Caco-2 (cell line): ENCODE measurements at regions of chr17 and their contacts with region 1.

Region 1: GRCh38 chr17:48997083-48997826 is at the start of gene IGF2BP1:
- DNase-seq: peak; percentile 93 to 95
- H3K4me3 ChIP-seq: peak within 1 kb of the TSS; percentile 82
- H3K4me3 Mint-ChIP-seq: peak within 1 kb of the TSS; percentile 86
- H3K27ac Mint-ChIP-seq: peak within 1 kb of the TSS; percentile 94
- H3K4me1 ChIP-seq: peaks cover 38% of the 10 kb centered on the region
- H3K4me1 Mint-ChIP-seq: peaks cover 40% of the 10 kb centered on the region
- H3K27me3 ChIP-seq: no peaks in the 10 kb centered on the region
- H3K27me3 Mint-ChIP-seq: no peaks in the 10 kb centered on the region
- CTCF ChIP-seq: no peak
- total RNA-seq, gene IGF2BP1: 583 and 601 TPM in 2 replicates

Region 2: DNA sequence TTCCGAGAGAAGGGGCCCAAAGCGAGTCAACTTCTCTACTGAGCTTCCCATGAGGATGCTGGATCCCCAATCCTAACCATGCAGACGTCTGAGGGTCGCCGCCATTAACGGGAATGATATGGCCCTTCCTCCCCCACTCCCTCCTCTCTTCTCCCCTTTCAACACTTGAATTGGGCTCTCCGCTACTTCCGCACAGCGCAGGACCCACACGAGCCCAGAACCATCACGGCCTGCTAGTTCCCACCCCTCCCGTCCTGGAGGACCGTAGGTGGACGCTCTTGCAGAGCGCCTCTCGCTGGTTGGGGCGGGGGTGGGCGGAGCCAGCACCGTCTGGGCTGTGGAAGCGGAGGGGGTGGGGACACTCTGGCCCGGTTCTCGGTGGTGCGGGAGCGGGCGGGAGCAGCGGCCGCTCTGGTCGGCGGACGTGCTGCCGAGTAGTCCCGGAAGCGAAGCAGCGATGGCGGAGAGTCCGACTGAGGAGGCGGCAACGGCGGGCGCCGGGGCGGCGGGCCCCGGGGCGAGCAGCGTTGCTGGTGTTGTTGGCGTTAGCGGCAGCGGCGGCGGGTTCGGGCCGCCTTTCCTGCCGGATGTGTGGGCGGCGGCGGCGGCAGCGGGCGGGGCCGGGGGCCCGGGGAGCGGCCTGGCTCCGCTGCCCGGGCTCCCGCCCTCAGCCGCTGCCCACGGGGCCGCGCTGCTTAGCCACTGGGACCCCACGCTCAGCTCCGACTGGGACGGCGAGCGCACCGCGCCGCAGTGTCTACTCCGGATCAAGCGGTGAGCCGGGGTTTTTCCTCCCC is 89.0 kb before region 1 on chr17 and contains the start of gene UBE2Z:
- CTCF ChIA-PET with region 1: interaction called, 4 read pairs
- POLR2A ChIA-PET with region 1: interaction called, 4 read pairs
- intact Hi-C with region 1: loop called (anchors 1 kb)
- DNase-seq: peak; percentile 99
- H3K4me3 ChIP-seq: peak within 1 kb of the TSS; percentile 94
- H3K4me3 Mint-ChIP-seq: peak within 1 kb of the TSS; percentile 89
- H3K27ac Mint-ChIP-seq: peak within 1 kb of the TSS; percentile 95
- H3K4me1 ChIP-seq: peaks cover 26% of the 10 kb centered on the region
- H3K4me1 Mint-ChIP-seq: peaks cover 37% of the 10 kb centered on the region
- H3K27me3 ChIP-seq: no peaks in the 10 kb centered on the region
- H3K27me3 Mint-ChIP-seq: no peaks in the 10 kb centered on the region
- CTCF ChIP-seq: peak in 1 of 2 experiments; percentile 68
- total RNA-seq, gene UBE2Z: 182 and 187 TPM in 2 replicates

Region 3: DNA sequence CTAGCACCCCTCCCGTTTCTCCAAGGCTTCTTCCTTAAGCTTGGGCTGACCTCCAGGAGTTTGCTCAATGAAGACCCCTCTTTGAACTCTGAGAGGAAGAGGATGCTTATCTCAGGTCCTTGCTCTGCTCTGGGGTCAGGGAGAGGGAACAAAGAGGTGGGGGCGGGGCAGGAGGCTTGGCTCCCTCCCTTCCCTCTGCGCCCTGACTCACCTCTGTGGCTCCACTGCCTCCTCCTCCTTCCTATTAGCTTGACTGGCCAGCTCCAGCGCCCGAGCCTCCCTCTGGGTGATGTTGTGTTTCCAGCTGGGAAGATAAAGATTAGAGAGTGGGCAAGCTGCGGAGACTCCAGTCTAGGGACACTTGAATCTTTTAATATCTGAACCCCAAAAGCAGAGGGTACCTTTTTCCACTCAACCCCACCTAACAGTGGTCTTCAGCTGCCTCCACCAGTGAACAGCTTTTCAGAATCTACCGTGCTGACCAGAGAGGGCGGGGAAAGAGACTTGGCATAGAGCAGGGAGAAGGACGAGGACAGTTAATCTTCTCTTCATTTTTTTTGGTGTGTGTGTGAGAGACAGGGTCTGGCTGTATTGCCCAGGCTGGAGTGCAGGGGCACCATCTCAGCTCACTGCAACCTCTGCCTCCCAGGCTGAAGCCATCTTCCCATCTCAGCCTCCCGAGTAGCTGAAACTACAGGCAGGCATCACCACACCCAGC is 35.6 kb before region 1 on chr17:
- CTCF ChIA-PET with region 1: interaction called, 6 read pairs
- POLR2A ChIA-PET with region 1: interaction called, 13 read pairs
- intact Hi-C with region 1: no loop called
- DNase-seq: peak; percentile 73 to 80
- H3K4me3 ChIP-seq: no peak overlapping the region
- H3K4me3 Mint-ChIP-seq: peak overlapping the region; percentile 39
- H3K27ac Mint-ChIP-seq: peak overlapping the region; percentile 80
- H3K4me1 ChIP-seq: peaks cover 28% of the 10 kb centered on the region
- H3K4me1 Mint-ChIP-seq: peaks cover 24% of the 10 kb centered on the region
- H3K27me3 ChIP-seq: no peaks in the 10 kb centered on the region
- H3K27me3 Mint-ChIP-seq: no peaks in the 10 kb centered on the region
- CTCF ChIP-seq: no peak

Region 4: DNA sequence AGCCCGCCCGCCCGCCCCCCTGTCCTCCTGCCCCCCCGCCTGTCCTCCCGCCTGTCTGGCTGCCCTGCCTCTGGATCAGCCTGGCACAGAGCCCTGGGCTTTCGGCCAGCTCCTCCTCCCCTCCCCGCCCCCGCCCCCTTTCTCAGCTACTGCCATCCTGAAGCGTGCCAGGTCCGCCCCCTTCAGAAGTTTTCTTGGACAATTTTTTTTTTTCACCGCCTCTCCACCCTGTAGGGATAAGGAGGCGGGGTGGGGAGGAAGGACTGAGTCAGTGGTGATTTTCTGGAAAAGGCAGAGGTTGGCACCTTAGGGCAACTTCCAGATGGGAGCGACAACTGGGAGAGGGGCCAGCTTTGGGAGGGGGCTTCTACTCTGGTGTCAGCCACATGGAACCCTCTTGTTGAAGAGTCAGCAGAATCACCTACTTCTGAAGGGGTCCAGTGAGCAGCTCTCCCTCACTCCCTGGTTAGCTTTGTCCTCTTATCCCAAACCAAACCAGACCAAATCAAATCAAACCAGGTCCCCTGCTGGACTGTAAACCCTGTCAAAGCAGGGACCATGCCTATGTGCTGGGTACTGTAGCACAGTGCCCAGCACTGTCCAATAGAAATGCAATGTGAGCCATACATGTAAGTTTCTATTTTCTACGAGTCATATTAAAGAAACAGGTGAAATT is 19.7 kb after region 1 on chr17:
- CTCF ChIA-PET with region 1: interaction called, 7 read pairs
- POLR2A ChIA-PET with region 1: interaction called, 20 read pairs
- intact Hi-C with region 1: loop called (anchors 1 kb)
- DNase-seq: peak in 1 of 2 experiments; percentile 40
- H3K4me3 ChIP-seq: no peak overlapping the region
- H3K4me3 Mint-ChIP-seq: peak overlapping the region; percentile 37
- H3K27ac Mint-ChIP-seq: peak overlapping the region; percentile 85
- H3K4me1 ChIP-seq: peaks cover 86% of the 10 kb centered on the region
- H3K4me1 Mint-ChIP-seq: peaks cover 73% of the 10 kb centered on the region
- H3K27me3 ChIP-seq: no peaks in the 10 kb centered on the region
- H3K27me3 Mint-ChIP-seq: no peaks in the 10 kb centered on the region
- CTCF ChIP-seq: no peak

Region 5: GRCh38 chr17:49051262-49051661 is 54.0 kb after region 1 on chr17:
- CTCF ChIA-PET with region 1: no interaction called
- POLR2A ChIA-PET with region 1: no interaction called
- intact Hi-C with region 1: no loop called
- DNase-seq: no peak
- H3K4me3 ChIP-seq: no peak overlapping the region
- H3K4me3 Mint-ChIP-seq: no peak overlapping the region
- H3K27ac Mint-ChIP-seq: no peak overlapping the region
- H3K4me1 ChIP-seq: peaks cover 9% of the 10 kb centered on the region; the same call in 1 of the 2 replicates
- H3K4me1 Mint-ChIP-seq: peaks cover 14% of the 10 kb centered on the region
- H3K27me3 ChIP-seq: no peaks in the 10 kb centered on the region
- H3K27me3 Mint-ChIP-seq: no peaks in the 10 kb centered on the region
- CTCF ChIP-seq: no peak

Region 6: DNA sequence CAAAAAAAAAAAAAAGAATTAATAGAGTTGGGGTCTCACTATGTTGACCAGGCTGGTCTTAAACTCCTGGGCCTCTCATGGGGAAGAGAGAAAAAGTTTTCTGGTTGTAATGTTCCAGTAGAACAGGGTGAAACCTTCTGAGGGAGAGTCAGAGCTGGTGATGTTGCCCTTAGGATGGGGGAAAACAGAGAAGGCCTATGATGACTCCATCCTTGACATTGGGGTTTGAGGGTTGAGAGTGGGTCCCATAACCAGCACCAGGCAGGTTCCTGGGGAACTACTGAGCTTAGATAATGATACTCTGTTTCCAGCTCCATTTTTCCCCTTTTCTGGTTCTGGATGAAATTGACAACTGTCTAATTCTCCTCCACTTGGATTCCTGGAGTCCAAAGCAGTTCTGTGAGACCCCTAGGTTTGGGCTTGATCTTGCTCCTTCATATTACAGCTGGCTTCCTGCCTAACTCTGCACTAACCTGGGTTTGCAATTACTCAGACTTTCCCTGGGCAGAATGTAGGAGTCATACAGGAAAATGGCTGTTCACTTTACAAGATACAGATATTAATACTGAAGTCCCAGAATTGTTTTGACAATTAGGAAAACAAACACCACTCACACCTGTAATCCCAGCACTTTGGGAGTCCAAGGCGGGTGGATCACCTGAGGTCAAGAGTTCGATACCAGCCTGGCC is 72.5 kb after region 1 on chr17:
- CTCF ChIA-PET with region 1: no interaction called
- POLR2A ChIA-PET with region 1: no interaction called
- intact Hi-C with region 1: no loop called
- DNase-seq: no peak
- H3K4me3 ChIP-seq: no peak overlapping the region
- H3K4me3 Mint-ChIP-seq: no peak overlapping the region
- H3K27ac Mint-ChIP-seq: no peak overlapping the region
- H3K4me1 ChIP-seq: peaks cover 23% of the 10 kb centered on the region
- H3K4me1 Mint-ChIP-seq: peaks cover 14% of the 10 kb centered on the region
- H3K27me3 ChIP-seq: no peaks in the 10 kb centered on the region
- H3K27me3 Mint-ChIP-seq: no peaks in the 10 kb centered on the region
- CTCF ChIP-seq: no peak

Region 7: GRCh38 chr17:49101054-49101947 is 104.0 kb after region 1 on chr17:
- CTCF ChIA-PET with region 1: no interaction called
- POLR2A ChIA-PET with region 1: no interaction called
- intact Hi-C with region 1: no loop called
- DNase-seq: peak; percentile 59 to 62
- H3K4me3 ChIP-seq: no peak overlapping the region
- H3K4me3 Mint-ChIP-seq: no peak overlapping the region
- H3K27ac Mint-ChIP-seq: peak overlapping the region; percentile 50
- H3K4me1 ChIP-seq: peaks cover 42% of the 10 kb centered on the region
- H3K4me1 Mint-ChIP-seq: peaks cover 25% of the 10 kb centered on the region
- H3K27me3 ChIP-seq: no peaks in the 10 kb centered on the region
- H3K27me3 Mint-ChIP-seq: no peaks in the 10 kb centered on the region
- CTCF ChIP-seq: no peak

Region 8: DNA sequence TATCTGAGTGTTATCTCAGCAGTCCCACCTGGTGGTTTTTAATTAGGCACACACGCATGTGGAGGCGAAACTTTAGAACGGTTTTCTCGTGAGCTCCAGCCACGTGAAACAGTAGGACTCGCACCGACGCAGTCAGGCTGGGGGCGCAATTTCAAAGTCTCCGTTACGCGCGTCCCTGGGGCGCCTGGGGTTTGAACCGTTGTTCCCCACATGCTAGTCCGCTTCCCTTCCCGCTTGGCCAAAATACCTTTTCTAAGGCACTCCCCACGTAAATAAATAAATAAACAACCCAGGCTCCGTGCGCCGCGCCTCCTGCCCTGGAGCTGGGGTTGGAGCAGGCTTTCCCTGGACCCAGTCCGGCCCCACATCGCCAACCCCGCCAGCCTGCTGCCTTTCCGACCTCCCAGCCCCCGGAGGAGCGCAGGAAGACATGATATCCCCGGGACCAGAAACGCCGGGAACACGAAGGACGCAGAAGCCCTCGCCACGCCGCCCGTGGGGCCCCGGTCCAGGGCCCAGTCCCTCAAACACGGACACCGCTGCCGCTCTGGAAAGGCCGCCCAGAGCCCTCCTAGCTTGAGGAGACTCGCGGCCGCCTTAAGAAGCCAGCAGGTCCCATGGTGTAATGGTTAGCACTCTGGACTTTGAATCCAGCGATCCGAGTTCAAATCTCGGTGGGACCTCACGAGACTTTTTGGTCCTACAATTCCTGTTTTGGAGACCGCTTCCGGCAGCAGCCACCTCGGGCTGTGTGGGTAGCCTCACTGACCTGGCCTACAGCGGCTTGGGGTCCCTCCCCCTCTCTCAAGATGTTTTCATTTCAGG is 194.9 kb after region 1 on chr17:
- CTCF ChIA-PET with region 1: no interaction called
- POLR2A ChIA-PET with region 1: interaction called, 9 read pairs
- intact Hi-C with region 1: loop called (anchors 2 kb)
- DNase-seq: peak; percentile 92 to 99
- H3K4me3 ChIP-seq: peak overlapping the region; percentile 72
- H3K4me3 Mint-ChIP-seq: peak overlapping the region; percentile 73
- H3K27ac Mint-ChIP-seq: peak overlapping the region; percentile 95
- H3K4me1 ChIP-seq: no peaks in the 10 kb centered on the region; the same call in 1 of the 2 replicates
- H3K4me1 Mint-ChIP-seq: peaks cover 14% of the 10 kb centered on the region
- H3K27me3 ChIP-seq: no peaks in the 10 kb centered on the region
- H3K27me3 Mint-ChIP-seq: no peaks in the 10 kb centered on the region
- CTCF ChIP-seq: peak; percentile 44 to 69